CD4-positive, alpha-beta memory T cell (primary cell): ENCODE measurements at regions of chr3 and their contacts with region 1.

Region 1: GRCh38 chr3:128794770-128795649 is 69.0 kb downstream of the RAB7A start:
- DNase-seq: peak; percentile 71 to 75 (median 74)
- H3K4me3 ChIP-seq: no peak overlapping the region
- H3K4me3 Mint-ChIP-seq: peak overlapping the region in 4 of 8 donors; percentile 7 to 47 (median 22)
- H3K27ac ChIP-seq: peak overlapping the region; percentile 18
- H3K27ac Mint-ChIP-seq: peak overlapping the region; percentile 73 to 91 (median 88)
- H3K4me1 ChIP-seq: peaks cover 58% of the 10 kb centered on the region
- H3K4me1 Mint-ChIP-seq: peaks cover 37 to 68% (median 55%) of the 10 kb centered on the region in 4 donors
- H3K27me3 ChIP-seq: no peaks in the 10 kb centered on the region
- H3K27me3 Mint-ChIP-seq: no peaks in the 10 kb centered on the region

Region 2: GRCh38 chr3:128634075-128634611 is 160.9 kb before region 1 on chr3:
- CTCF ChIA-PET with region 1: no interaction called
- POLR2A ChIA-PET with region 1: no interaction called
- intact Hi-C with region 1: no loop called
- DNase-seq: no peak
- H3K4me3 ChIP-seq: no peak overlapping the region
- H3K4me3 Mint-ChIP-seq: no peak overlapping the region
- H3K27ac ChIP-seq: no peak overlapping the region
- H3K27ac Mint-ChIP-seq: peak overlapping the region in 1 of 7 donors; percentile 52
- H3K4me1 ChIP-seq: no peaks in the 10 kb centered on the region
- H3K4me1 Mint-ChIP-seq: peaks cover 7 to 17% (median 16%) of the 10 kb centered on the region in 4 donors
- H3K27me3 ChIP-seq: no peaks in the 10 kb centered on the region
- H3K27me3 Mint-ChIP-seq: no peaks in the 10 kb centered on the region

Region 3: GRCh38 chr3:128767094-128767750 is 27.8 kb before region 1 on chr3:
- CTCF ChIA-PET with region 1: interaction called, 10 read pairs
- POLR2A ChIA-PET with region 1: no interaction called
- intact Hi-C with region 1: no loop called
- DNase-seq: no peak
- H3K4me3 ChIP-seq: no peak overlapping the region
- H3K4me3 Mint-ChIP-seq: peak overlapping the region in 5 of 8 donors; percentile 16 to 69 (median 57)
- H3K27ac ChIP-seq: no peak overlapping the region
- H3K27ac Mint-ChIP-seq: peak overlapping the region in 5 of 7 donors; percentile 9 to 72 (median 18)
- H3K4me1 ChIP-seq: peaks cover 54% of the 10 kb centered on the region
- H3K4me1 Mint-ChIP-seq: peaks cover 58 to 96% (median 74%) of the 10 kb centered on the region in 4 donors
- H3K27me3 ChIP-seq: no peaks in the 10 kb centered on the region
- H3K27me3 Mint-ChIP-seq: no peaks in the 10 kb centered on the region

Region 4: DNA sequence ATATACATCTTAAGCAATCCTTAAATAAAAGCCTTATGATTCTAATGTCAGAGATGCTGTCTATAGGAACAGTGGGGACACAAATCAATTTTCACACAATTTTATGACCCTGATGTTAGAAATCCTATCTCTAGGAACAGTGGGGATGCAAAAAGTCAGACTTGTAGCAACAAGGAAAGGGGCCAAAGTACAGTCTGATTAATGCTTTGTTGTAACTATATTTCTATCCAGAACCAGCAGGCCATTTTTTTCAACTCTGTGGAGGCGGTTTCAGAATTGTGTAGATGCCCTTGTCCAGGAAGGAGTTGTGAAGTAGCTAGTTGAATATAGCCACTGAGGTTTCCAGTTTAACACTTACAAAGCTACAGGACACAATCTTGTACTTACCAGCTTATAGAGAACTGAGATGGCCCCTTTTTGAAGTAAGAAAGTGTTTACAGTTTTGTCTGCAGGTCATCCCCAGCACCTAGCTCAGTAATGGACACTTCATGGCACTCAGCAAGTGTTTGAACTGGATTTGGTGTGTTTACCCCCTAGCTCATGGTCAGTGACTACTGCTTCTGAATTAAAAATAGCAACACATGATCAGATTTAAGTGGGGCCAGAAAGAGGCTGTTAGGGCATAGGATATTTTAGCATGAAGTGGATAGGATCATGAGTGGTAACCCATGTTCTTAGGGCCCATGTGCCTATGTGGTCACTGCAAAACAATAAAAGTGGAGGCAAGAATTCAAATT is 14.7 kb before region 1 on chr3:
- CTCF ChIA-PET with region 1: interaction called, 43 read pairs
- POLR2A ChIA-PET with region 1: interaction called, 3 read pairs
- intact Hi-C with region 1: no loop called
- DNase-seq: no peak
- H3K4me3 ChIP-seq: no peak overlapping the region
- H3K4me3 Mint-ChIP-seq: no peak overlapping the region
- H3K27ac ChIP-seq: no peak overlapping the region
- H3K27ac Mint-ChIP-seq: peak overlapping the region in 6 of 7 donors; percentile 6 to 88 (median 63)
- H3K4me1 ChIP-seq: peaks cover 62% of the 10 kb centered on the region
- H3K4me1 Mint-ChIP-seq: peaks cover 54 to 90% (median 73%) of the 10 kb centered on the region in 4 donors
- H3K27me3 ChIP-seq: no peaks in the 10 kb centered on the region
- H3K27me3 Mint-ChIP-seq: no peaks in the 10 kb centered on the region

Region 5: GRCh38 chr3:128824132-128824850 is 29.3 kb after region 1 on chr3:
- CTCF ChIA-PET with region 1: no interaction called
- POLR2A ChIA-PET with region 1: no interaction called
- intact Hi-C with region 1: no loop called
- DNase-seq: no peak
- H3K4me3 ChIP-seq: no peak overlapping the region
- H3K4me3 Mint-ChIP-seq: no peak overlapping the region
- H3K27ac ChIP-seq: no peak overlapping the region
- H3K27ac Mint-ChIP-seq: peak overlapping the region in 5 of 7 donors; percentile 10 to 77 (median 32)
- H3K4me1 ChIP-seq: no peaks in the 10 kb centered on the region
- H3K4me1 Mint-ChIP-seq: peaks cover 0 to 2% (median 0%) of the 10 kb centered on the region in 4 donors
- H3K27me3 ChIP-seq: no peaks in the 10 kb centered on the region
- H3K27me3 Mint-ChIP-seq: no peaks in the 10 kb centered on the region